HEK293 (cell line): ENCODE measurements at regions of chr18 and their contacts with region 1.

Region 1: DNA sequence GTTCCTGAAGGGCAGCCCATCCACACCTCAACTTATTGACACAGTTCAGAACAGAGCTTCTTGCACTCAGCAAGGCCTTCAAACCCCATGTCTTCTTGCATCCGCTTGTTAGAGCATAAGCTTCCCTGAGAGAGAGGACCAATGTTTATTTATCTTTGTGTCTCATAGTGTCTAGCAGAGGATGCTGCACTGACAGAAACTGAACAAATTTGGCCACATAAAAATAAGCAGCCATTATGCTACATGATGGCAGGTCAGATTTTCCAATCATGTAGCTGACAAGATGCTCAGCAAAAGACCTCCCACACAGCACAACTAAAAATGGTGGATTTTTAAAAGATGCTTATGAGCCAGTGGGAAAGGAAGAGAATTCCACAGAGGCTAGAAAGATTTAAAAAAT is 38.1 kb upstream of the SIGLEC15 start:
- H3K4me3 ChIP-seq: no peak overlapping the region
- H3K27ac ChIP-seq: no peak overlapping the region
- H3K4me1 ChIP-seq: no peaks in the 10 kb centered on the region
- CTCF ChIP-seq: no peak

Region 2: DNA sequence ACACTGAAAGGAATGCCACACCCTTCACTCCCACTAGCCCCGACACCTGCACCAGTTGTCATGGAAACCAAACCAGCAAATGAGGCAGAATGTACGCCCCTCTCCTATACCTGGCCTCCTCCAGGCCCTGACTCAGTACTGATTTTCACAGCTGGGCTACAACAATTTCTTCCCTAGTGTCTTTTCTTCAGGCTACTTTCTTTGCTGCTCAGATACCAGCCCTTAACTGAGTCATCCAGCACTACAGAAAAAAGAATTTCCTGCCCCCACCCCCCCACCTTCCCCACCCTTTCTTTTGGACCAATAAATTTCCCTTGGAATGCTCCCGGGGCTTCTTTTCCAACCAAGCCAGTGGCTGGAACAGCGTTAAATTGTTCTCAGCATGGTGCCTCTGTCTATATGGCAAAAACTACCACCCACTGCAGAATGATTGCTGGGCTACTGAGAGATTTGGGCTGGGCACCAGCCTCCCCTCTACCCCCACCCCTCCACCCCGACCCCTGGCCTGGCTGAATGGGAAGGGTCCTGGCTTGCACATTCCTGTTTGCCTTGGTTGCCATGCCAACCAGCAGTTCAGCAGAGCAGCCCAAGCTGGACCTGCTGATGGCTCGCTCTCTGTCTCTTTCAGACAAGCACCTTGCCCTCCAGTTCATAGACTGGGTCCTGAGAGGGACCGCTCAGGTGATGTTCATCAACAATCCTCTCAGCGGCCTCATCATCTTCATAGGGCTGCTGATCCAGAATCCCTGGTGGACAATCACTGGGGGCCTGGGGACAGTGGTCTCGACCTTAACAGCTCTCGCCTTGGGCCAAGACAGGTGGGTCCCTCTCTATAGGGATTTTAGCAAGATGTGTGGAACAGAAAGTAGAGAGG is 160.8 kb before region 1 on chr18:
- CTCF ChIA-PET with region 1: no interaction called
- POLR2A ChIA-PET with region 1: interaction called, 12 read pairs
- H3K4me3 ChIP-seq: no peak overlapping the region
- H3K27ac ChIP-seq: no peak overlapping the region; the same call in 1 of the 2 replicates
- H3K4me1 ChIP-seq: peaks cover 11% of the 10 kb centered on the region
- CTCF ChIP-seq: no peak